HCT116 (cell line): ENCODE measurements at regions of chr17 and their contacts with region 1.

Region 1: GRCh38 chr17:7045909-7046724 is 2.2 kb upstream of the SLC16A11 start:
- DNase-seq: peak; percentile 71
- ATAC-seq: peak; percentile 82
- H3K4me3 ChIP-seq: peak overlapping the region; percentile 49 to 65
- H3K27ac ChIP-seq: peak overlapping the region; percentile 46
- H3K4me1 ChIP-seq: peaks cover 31 to 48% of the 10 kb centered on the region in 2 experiments
- H3K27me3 ChIP-seq: no peaks in the 10 kb centered on the region
- CTCF ChIP-seq: peak; percentile 69 to 96 (median 92)
- POLR2A ChIP-seq: no peak
- RAD21 ChIP-seq: peak; percentile 96

Region 2: GRCh38 chr17:6959700-6960099 is 86.4 kb before region 1 on chr17:
- CTCF ChIA-PET with region 1: no interaction called
- POLR2A ChIA-PET with region 1: no interaction called
- RAD21 ChIA-PET with region 1: no interaction called
- intact Hi-C with region 1: no loop called
- DNase-seq: no peak
- ATAC-seq: no peak
- H3K4me3 ChIP-seq: no peak overlapping the region
- H3K27ac ChIP-seq: no peak overlapping the region
- H3K4me1 ChIP-seq: no peaks in the 10 kb centered on the region
- H3K27me3 ChIP-seq: no peaks in the 10 kb centered on the region
- CTCF ChIP-seq: no peak
- POLR2A ChIP-seq: no peak
- RAD21 ChIP-seq: no peak

Region 3: DNA sequence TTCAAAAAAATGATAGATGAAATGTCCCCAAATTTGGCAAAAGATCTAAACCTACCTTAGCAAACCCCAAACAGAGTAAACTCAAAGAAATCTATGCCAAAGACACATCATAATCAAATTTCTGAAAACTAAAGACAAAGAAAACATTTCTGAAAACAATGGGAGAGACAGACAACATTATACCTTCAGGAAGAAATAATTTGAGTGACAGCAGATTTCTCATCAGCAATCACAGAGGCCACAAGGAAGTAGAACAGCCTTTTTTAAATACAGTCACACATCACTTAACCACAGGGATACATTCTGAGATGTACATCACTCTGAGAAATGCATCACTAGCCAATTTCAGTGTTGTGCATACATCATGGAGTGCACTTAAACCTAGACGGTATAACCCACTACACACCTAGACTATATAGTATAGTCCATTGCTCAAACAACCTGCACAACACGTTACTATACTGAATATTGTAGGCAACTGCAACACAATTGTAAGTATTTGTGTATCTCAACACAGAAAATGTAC is 75.2 kb before region 1 on chr17:
- CTCF ChIA-PET with region 1: no interaction called
- POLR2A ChIA-PET with region 1: no interaction called
- RAD21 ChIA-PET with region 1: no interaction called
- intact Hi-C with region 1: no loop called
- DNase-seq: no peak
- ATAC-seq: no peak
- H3K4me3 ChIP-seq: no peak overlapping the region
- H3K27ac ChIP-seq: no peak overlapping the region
- H3K4me1 ChIP-seq: no peaks in the 10 kb centered on the region
- H3K27me3 ChIP-seq: no peaks in the 10 kb centered on the region
- CTCF ChIP-seq: no peak
- POLR2A ChIP-seq: no peak
- RAD21 ChIP-seq: no peak

Region 4: GRCh38 chr17:6981426-6981825 is 64.7 kb before region 1 on chr17:
- CTCF ChIA-PET with region 1: no interaction called
- POLR2A ChIA-PET with region 1: no interaction called
- RAD21 ChIA-PET with region 1: no interaction called
- intact Hi-C with region 1: no loop called
- DNase-seq: no peak
- ATAC-seq: no peak
- H3K4me3 ChIP-seq: no peak overlapping the region
- H3K27ac ChIP-seq: no peak overlapping the region
- H3K4me1 ChIP-seq: peaks cover 2 to 8% of the 10 kb centered on the region in 2 experiments; a peak in 3 of 4 replicates
- H3K27me3 ChIP-seq: no peaks in the 10 kb centered on the region
- CTCF ChIP-seq: no peak
- POLR2A ChIP-seq: no peak
- RAD21 ChIP-seq: no peak

Region 5: GRCh38 chr17:7035591-7036368 is 10.3 kb before region 1 on chr17 and contains the start of gene SLC16A13:
- CTCF ChIA-PET with region 1: interaction called, 26 read pairs
- POLR2A ChIA-PET with region 1: interaction called, 8 read pairs
- RAD21 ChIA-PET with region 1: interaction called in 1 of 2 experiments, 3 read pairs
- intact Hi-C with region 1: no loop called
- DNase-seq: peak; percentile 94
- ATAC-seq: peak; percentile 96
- H3K4me3 ChIP-seq: peak within 1 kb of the TSS; percentile 60 to 78
- H3K27ac ChIP-seq: peak within 1 kb of the TSS; percentile 99
- H3K4me1 ChIP-seq: peaks cover 4 to 25% of the 10 kb centered on the region in 2 experiments
- H3K27me3 ChIP-seq: no peaks in the 10 kb centered on the region
- CTCF ChIP-seq: no peak
- POLR2A ChIP-seq: peak; percentile 89
- RAD21 ChIP-seq: no peak
- total RNA-seq, gene SLC16A13: 6.8 TPM

Region 6: DNA sequence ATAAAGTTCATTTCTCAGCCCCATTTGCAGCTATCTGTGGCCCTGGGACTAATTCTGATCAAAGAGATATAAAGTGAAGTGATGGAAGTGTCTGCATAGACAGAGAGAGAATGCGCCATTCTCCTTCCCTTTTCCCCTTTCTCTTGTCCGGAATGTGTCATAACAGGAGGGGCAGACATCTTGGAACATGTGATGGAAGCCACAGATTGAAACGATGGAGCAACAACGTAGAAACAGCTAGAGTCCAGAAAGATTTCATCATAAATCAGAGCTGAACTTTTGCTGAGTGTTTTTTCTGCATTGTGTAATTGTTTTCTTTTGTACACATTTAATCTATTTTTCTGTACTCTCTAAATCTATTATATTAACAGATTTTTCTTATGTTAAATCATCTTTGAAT is 121.7 kb after region 1 on chr17:
- CTCF ChIA-PET with region 1: interaction called, 48 read pairs
- POLR2A ChIA-PET with region 1: interaction called, 8 read pairs
- RAD21 ChIA-PET with region 1: interaction called, 8 to 16 read pairs
- intact Hi-C with region 1: loop called (anchors 1 kb)
- DNase-seq: no peak
- ATAC-seq: no peak
- H3K4me3 ChIP-seq: no peak overlapping the region
- H3K27ac ChIP-seq: no peak overlapping the region
- H3K4me1 ChIP-seq: no peaks in the 10 kb centered on the region
- H3K27me3 ChIP-seq: no peaks in the 10 kb centered on the region
- CTCF ChIP-seq: no peak
- POLR2A ChIP-seq: no peak
- RAD21 ChIP-seq: no peak

Region 7: GRCh38 chr17:7214300-7215135 is 168.4 kb after region 1 on chr17:
- CTCF ChIA-PET with region 1: interaction called, 19 read pairs
- POLR2A ChIA-PET with region 1: interaction called, 4 read pairs
- RAD21 ChIA-PET with region 1: interaction called in 1 of 2 experiments, 3 read pairs
- intact Hi-C with region 1: loop called (anchors 1 kb)
- DNase-seq: peak; percentile 96
- ATAC-seq: peak; percentile 83
- H3K4me3 ChIP-seq: peak overlapping the region; percentile 25 to 50
- H3K27ac ChIP-seq: peak overlapping the region; percentile 43
- H3K4me1 ChIP-seq: peaks cover 10 to 55% of the 10 kb centered on the region in 2 experiments; a peak in 3 of 4 replicates
- H3K27me3 ChIP-seq: no peaks in the 10 kb centered on the region
- CTCF ChIP-seq: peak in 2 of 3 experiments; percentile 56 to 66; a peak in 4 of 6 replicates
- POLR2A ChIP-seq: no peak
- RAD21 ChIP-seq: peak; percentile 45

Region 8: DNA sequence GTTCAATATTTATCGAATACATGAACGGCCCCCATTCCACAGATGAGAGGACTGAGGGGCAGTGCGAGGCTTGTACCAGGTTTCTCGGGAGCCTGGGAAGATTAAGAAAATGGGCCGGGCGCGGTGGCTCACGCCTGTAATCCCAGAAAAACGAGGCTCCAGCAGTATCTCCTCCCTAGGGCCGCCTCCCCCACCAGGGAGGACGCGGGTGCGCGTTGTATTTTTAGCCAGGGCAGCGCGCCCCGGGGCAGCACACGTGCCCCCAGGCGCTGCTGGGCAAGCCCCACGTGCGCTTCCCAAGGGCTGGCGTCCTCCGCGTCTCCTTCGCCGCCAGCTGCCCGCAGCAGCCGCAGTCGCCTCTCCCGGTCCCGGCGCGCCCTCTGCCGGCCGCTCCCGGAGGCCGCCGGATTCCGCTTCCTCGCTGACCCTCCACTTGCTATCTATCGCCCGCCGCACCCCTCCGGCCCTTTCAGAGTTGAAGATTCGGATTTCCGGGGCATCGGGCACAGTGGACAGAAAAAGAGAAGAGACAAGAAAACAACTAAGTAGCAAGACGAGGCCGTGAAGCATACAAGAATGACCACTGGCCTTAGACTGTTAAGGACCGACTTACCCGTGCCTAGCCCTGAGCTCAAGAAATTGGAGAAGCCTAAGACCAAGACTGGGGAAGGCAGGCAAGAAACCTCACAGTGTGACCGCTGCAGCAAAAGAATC is 250.2 kb after region 1 on chr17:
- CTCF ChIA-PET with region 1: interaction called, 18 read pairs
- POLR2A ChIA-PET with region 1: no interaction called
- RAD21 ChIA-PET with region 1: interaction called in 1 of 2 experiments, 5 read pairs
- intact Hi-C with region 1: loop called (anchors 5 kb)
- DNase-seq: peak; percentile 66
- ATAC-seq: peak; percentile 77
- H3K4me3 ChIP-seq: peak overlapping the region; percentile 25 to 33
- H3K27ac ChIP-seq: peak overlapping the region; percentile 37
- H3K4me1 ChIP-seq: peaks cover 17 to 41% of the 10 kb centered on the region in 2 experiments; a peak in 3 of 4 replicates
- H3K27me3 ChIP-seq: no peaks in the 10 kb centered on the region
- CTCF ChIP-seq: peak; percentile 91 to 94 (median 93)
- POLR2A ChIP-seq: no peak
- RAD21 ChIP-seq: peak; percentile 97

Region 9: DNA sequence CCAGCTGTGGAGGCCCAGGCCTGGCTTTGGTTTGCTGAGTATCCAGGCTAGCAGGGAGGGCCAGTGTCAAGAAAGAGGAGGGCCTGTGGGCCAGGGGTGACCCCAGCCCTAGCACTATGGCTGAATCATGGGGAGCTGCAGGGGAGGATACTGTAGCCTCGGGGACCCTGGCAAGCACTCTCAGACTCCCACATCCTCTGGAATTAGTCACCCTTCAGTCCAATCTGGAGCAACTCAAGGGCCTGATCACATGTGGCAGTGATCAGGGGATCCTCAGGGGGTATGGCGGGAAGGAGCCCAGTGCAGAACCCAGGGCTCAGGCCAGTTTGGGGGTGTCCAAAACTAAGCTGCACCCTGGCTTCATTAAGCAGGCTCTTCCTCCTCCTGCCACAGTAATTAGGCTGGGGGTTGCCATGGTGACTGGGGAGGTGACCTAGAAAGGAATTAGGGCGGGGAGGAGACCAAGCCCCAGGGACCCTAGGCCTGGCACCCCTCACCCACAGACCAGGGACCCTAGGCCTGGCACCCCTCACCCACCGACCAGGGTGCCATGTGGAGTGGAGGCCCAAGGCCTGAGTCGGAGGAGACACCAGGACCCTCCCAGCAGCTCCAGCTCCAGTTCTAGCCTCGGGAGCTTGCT is 367.3 kb after region 1 on chr17:
- CTCF ChIA-PET with region 1: no interaction called
- POLR2A ChIA-PET with region 1: no interaction called
- RAD21 ChIA-PET with region 1: no interaction called
- intact Hi-C with region 1: no loop called
- DNase-seq: no peak
- ATAC-seq: no peak
- H3K4me3 ChIP-seq: no peak overlapping the region
- H3K27ac ChIP-seq: no peak overlapping the region; the same call in 1 of the 2 replicates
- H3K4me1 ChIP-seq: peaks cover 0 to 3% of the 10 kb centered on the region in 2 experiments; a peak in 1 of 4 replicates
- H3K27me3 ChIP-seq: no peaks in the 10 kb centered on the region
- CTCF ChIP-seq: no peak
- POLR2A ChIP-seq: no peak
- RAD21 ChIP-seq: no peak

Region 10: DNA sequence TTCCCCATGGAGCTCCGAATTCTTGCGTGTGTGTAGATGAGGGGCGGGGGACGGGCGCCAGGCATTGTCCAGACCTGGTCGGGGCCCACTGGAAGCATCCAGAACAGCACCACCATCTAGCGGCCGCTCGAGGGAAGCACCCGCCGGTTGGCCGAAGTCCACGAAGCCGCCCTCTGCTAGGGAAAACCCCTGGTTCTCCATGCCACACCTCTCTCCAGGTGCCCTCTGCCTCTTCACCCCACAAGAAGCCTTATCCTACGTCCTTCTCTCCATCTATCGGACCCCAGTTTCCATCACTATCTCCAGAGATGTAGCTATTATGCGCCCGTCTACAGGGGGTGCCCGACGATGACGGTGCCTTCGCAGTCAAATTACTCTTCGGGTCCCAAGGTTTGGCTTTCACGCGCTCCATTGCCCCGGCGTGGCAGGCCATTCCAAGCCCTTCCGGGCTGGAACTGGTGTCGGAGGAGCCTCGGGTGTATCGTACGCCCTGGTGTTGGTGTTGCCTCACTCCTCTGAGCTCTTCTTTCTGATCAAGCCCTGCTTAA is 515.0 kb after region 1 on chr17:
- CTCF ChIA-PET with region 1: interaction called, 11 read pairs
- POLR2A ChIA-PET with region 1: no interaction called
- RAD21 ChIA-PET with region 1: no interaction called
- intact Hi-C with region 1: no loop called
- DNase-seq: peak; percentile 71
- ATAC-seq: peak; percentile 76
- H3K4me3 ChIP-seq: peak overlapping the region; percentile 79 to 83
- H3K27ac ChIP-seq: peak overlapping the region; percentile 86
- H3K4me1 ChIP-seq: peaks cover 27 to 55% of the 10 kb centered on the region in 2 experiments
- H3K27me3 ChIP-seq: no peaks in the 10 kb centered on the region
- CTCF ChIP-seq: peak; percentile 73 to 88 (median 78)
- POLR2A ChIP-seq: no peak
- RAD21 ChIP-seq: peak; percentile 90